Calu3 (cell line): ENCODE measurements at regions of chr14 and their contacts with region 1.

Region 1: GRCh38 chr14:23095196-23096108 is at the start of gene C14orf119:
- DNase-seq: peak; percentile 98
- H3K4me3 Mint-ChIP-seq: no peak within 1 kb of the TSS
- H3K27ac Mint-ChIP-seq: no peak within 1 kb of the TSS
- H3K4me1 Mint-ChIP-seq: peaks cover 9% of the 10 kb centered on the region
- H3K27me3 Mint-ChIP-seq: no peaks in the 10 kb centered on the region
- CTCF ChIP-seq: no peak
- total RNA-seq, gene C14orf119: 47.0 and 47.3 TPM in 2 replicates

Region 2: GRCh38 chr14:23068476-23069412 is 26.7 kb before region 1 on chr14:
- CTCF ChIA-PET with region 1: interaction called, 25 read pairs
- intact Hi-C with region 1: no loop called
- DNase-seq: peak; percentile 82
- H3K4me3 Mint-ChIP-seq: no peak overlapping the region
- H3K27ac Mint-ChIP-seq: no peak overlapping the region
- H3K4me1 Mint-ChIP-seq: peaks cover 36% of the 10 kb centered on the region
- H3K27me3 Mint-ChIP-seq: no peaks in the 10 kb centered on the region
- CTCF ChIP-seq: peak; percentile 90

Region 3: DNA sequence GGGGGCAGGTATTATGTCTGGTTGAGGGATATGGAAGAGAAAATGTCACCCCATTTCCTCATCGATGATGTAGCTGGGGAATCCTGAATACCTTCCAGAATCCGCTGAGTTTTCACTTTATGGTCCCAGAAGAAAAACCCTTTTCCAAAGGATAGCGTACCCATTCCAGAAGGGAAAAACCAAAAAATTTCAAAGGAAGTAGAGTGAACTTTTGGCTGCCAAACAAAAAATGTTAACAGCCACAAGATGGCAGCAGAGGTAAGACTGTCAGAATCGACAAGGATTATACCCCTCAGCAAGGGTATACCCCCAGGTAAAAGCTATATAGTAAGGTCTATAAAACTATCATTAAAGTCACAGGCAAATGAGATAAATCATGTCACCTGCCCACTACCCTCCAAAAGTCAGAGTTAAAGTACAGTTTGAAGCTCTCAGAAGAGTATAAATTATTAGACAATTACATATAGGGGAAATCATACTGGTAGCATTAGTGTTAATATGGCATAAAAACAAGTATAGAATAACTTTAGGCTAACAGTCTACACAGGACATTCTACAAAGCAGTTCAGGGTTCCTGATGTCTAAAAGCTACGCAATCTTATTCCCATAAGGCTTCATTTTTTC is 18.6 kb before region 1 on chr14:
- CTCF ChIA-PET with region 1: interaction called, 16 read pairs
- intact Hi-C with region 1: no loop called
- DNase-seq: no peak
- H3K4me3 Mint-ChIP-seq: no peak overlapping the region
- H3K27ac Mint-ChIP-seq: no peak overlapping the region
- H3K4me1 Mint-ChIP-seq: peaks cover 29% of the 10 kb centered on the region
- H3K27me3 Mint-ChIP-seq: no peaks in the 10 kb centered on the region
- CTCF ChIP-seq: peak; percentile 36

Region 4: DNA sequence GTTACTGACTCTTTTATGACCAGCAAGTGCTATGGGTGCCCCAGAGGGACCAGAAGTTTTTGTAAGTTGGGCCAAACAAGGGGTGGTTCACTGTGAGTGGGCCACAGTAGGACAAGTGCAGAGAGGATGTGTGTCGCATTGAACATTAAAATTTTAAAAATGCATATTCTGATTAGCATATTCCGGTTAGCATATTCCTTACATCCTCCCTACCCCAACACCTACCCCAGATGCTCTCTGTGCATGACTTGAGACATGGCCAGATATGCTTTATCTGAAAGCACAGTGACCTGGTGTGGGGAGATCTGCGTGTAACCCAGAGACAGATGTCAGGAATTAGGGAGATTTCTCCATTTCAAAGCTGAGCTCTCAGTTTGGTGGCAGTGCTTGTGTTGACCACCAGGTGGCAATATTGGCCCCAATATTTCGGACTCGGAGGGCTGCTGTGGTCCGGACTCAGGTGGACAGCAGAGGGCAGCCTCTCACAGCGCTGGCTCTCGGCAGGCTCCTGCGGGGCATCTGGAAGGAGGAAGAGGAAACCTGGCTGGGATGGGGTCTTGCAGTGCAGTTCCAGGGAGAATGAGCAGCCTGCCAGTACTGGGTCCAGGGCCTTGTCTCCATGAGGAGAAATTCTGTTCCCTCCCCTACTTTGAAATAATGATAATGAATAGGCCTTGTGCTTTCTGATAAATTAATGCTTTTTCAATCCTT is 25.2 kb after region 1 on chr14:
- CTCF ChIA-PET with region 1: interaction called, 11 read pairs
- intact Hi-C with region 1: no loop called
- DNase-seq: peak; percentile 89
- H3K4me3 Mint-ChIP-seq: no peak overlapping the region
- H3K27ac Mint-ChIP-seq: no peak overlapping the region
- H3K4me1 Mint-ChIP-seq: peaks cover 24% of the 10 kb centered on the region
- H3K27me3 Mint-ChIP-seq: peaks cover 52% of the 10 kb centered on the region
- CTCF ChIP-seq: peak; percentile 95